Esophagus squamous epithelium (tissue), 5 donors: ENCODE measurements at regions of chr12 and their contacts with region 1.

Region 1: DNA sequence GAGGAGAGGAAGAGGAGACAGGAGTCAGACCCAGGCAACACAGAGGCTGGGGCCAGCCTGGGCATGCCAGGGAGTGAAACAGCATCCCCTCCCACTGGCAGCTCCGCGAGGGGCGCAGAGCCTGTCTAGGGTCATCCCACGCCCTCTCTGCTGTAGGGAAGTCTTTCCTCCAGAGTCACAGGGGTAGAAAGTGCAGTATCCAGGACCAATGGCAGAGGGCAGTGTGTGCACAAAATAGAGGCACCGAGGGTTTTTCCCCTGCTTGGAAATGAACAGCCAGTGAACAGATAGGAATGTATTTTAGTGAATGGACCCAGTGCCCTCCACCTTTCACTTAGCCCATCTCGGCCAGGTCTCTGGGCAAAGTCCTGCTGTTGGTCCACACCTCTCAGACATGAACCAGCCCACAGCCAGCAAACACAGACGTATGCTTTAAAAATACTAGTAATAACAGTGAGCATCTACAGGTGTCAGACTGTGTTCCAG is 9.4 kb upstream of the KRT74 start:
- DNase-seq: no peak
- H3K4me3 ChIP-seq: no peak overlapping the region
- H3K27ac ChIP-seq: peak overlapping the region; percentile 74 to 83 (median 77)
- H3K4me1 ChIP-seq: peaks cover 25 to 53% (median 27%) of the 10 kb centered on the region in 3 donors
- H3K27me3 ChIP-seq: no peaks in the 10 kb centered on the region
- CTCF ChIP-seq: peak in 5 of 6 experiments; percentile 52 to 87 (median 80)
- POLR2A ChIP-seq: no peak

Region 2: GRCh38 chr12:52380271-52380694 is 202.7 kb before region 1 on chr12:
- intact Hi-C with region 1: loop called (anchors 10 kb)
- DNase-seq: no peak
- H3K4me3 ChIP-seq: no peak overlapping the region
- H3K27ac ChIP-seq: no peak overlapping the region
- H3K4me1 ChIP-seq: no peaks in the 10 kb centered on the region
- H3K27me3 ChIP-seq: peaks cover 0 to 12% (median 0%) of the 10 kb centered on the region in 4 donors
- CTCF ChIP-seq: peak in 5 of 6 experiments; percentile 46 to 81 (median 60)
- POLR2A ChIP-seq: no peak

Region 3: GRCh38 chr12:52473768-52474167 is 109.2 kb before region 1 on chr12 and contains the start of gene KRT6C:
- intact Hi-C with region 1: no loop called
- DNase-seq: no peak
- H3K4me3 ChIP-seq: no peak within 1 kb of the TSS
- H3K27ac ChIP-seq: peak within 1 kb of the TSS in 2 of 4 donors; percentile 56 to 58
- H3K4me1 ChIP-seq: peaks cover 0 to 7% (median 0%) of the 10 kb centered on the region in 3 donors
- H3K27me3 ChIP-seq: no peaks in the 10 kb centered on the region
- CTCF ChIP-seq: no peak
- POLR2A ChIP-seq: no peak
- total RNA-seq, gene KRT6C: 99.0 to 3,532 (median 1,742) TPM